CD4-positive, alpha-beta T cell (primary cell): ENCODE measurements at regions of chr10 and their contacts with region 1.

Region 1: DNA sequence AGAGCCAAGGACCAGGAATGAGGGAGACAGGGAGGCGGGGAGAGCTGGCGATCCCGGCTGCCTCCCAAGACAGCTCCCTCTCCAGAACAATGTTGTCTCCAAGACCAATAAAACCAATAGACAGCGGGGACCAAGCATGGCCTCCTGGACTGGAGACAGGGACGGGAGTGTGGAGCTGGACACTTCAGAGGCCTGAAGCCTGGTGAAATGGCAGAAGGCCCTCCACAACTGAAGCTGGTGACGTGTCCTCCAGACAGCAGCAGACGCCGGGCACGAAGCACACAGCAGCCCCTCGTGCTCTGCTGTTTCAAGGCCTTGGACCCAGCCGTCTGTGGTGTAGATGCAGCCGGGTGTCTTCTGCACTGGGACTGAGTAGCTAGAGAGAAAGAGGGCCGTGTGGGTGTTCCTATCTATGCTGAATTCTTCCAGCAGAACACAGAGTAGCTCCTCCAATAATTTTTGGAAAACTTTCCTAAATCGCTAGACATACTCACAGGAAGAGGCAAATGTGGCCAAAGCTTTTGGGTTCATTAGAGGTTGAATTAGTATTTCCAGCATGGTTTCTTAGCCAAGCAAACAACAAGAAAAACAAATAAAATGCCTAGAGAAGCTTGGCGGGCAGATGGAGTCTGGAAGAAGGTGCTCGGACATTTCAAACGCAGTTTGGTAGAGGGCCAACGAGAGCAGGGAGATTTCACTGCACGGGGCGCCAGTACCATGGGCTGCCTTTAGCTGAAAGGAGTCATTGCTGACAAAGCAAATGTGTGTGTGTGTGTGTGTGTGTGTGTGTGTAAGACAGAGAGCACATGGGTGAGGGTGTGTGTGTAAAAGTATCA is 570.4 kb downstream of the TCERG1L start:
- DNase-seq: peak in 1 of 14 experiments; percentile 21
- ATAC-seq: no peak
- H3K4me3 ChIP-seq: no peak overlapping the region
- H3K4me3 Mint-ChIP-seq: no peak overlapping the region
- H3K27ac ChIP-seq: no peak overlapping the region
- H3K27ac Mint-ChIP-seq: no peak overlapping the region
- H3K4me1 ChIP-seq: no peaks in the 10 kb centered on the region
- H3K4me1 Mint-ChIP-seq: no peaks in the 10 kb centered on the region
- H3K27me3 ChIP-seq: no peaks in the 10 kb centered on the region
- H3K27me3 Mint-ChIP-seq: no peaks in the 10 kb centered on the region
- CTCF ChIP-seq: no peak

Region 2: GRCh38 chr10:130864961-130865818 is 124.1 kb after region 1 on chr10:
- CTCF ChIA-PET with region 1: no interaction called
- POLR2A ChIA-PET with region 1: no interaction called
- intact Hi-C with region 1: loop called in 1 of 2 experiments (anchors 5 kb)
- DNase-seq: no peak
- ATAC-seq: no peak
- H3K4me3 ChIP-seq: no peak overlapping the region
- H3K4me3 Mint-ChIP-seq: no peak overlapping the region
- H3K27ac ChIP-seq: no peak overlapping the region
- H3K27ac Mint-ChIP-seq: no peak overlapping the region
- H3K4me1 ChIP-seq: no peaks in the 10 kb centered on the region
- H3K4me1 Mint-ChIP-seq: no peaks in the 10 kb centered on the region
- H3K27me3 ChIP-seq: peaks cover 0 to 3% of the 10 kb centered on the region in 2 experiments
- H3K27me3 Mint-ChIP-seq: peaks cover under 1% of the 10 kb centered on the region
- CTCF ChIP-seq: no peak

Region 3: GRCh38 chr10:131213741-131214505 is 472.8 kb after region 1 on chr10:
- CTCF ChIA-PET with region 1: no interaction called
- POLR2A ChIA-PET with region 1: no interaction called
- intact Hi-C with region 1: no loop called
- DNase-seq: no peak
- ATAC-seq: no peak
- H3K4me3 ChIP-seq: no peak overlapping the region
- H3K4me3 Mint-ChIP-seq: no peak overlapping the region
- H3K27ac ChIP-seq: no peak overlapping the region
- H3K27ac Mint-ChIP-seq: no peak overlapping the region
- H3K4me1 ChIP-seq: no peaks in the 10 kb centered on the region
- H3K4me1 Mint-ChIP-seq: no peaks in the 10 kb centered on the region
- H3K27me3 ChIP-seq: no peaks in the 10 kb centered on the region
- H3K27me3 Mint-ChIP-seq: no peaks in the 10 kb centered on the region
- CTCF ChIP-seq: no peak